Heart right ventricle (tissue), 16 donors: ENCODE measurements at regions of chr1 and their contacts with region 1.

Region 1: GRCh38 chr1:45583264-45583665 is 576 bp upstream of the NASP start:
- DNase-seq: peak; percentile 94 to 97
- ATAC-seq: peak; percentile 91 to 95 (median 93)
- H3K4me3 ChIP-seq: peak overlapping the region; percentile 80 to 100 (median 99)
- H3K27ac ChIP-seq: peak overlapping the region; percentile 86 to 96 (median 94)
- H3K4me1 ChIP-seq: peaks cover 6 to 39% (median 20%) of the 10 kb centered on the region in 9 donors
- H3K27me3 ChIP-seq: no peaks in the 10 kb centered on the region
- CTCF ChIP-seq: no peak

Region 2: GRCh38 chr1:45679123-45679522 is 95.9 kb after region 1 on chr1:
- intact Hi-C with region 1: loop called in 2 of 10 experiments (anchors 10 kb)
- DNase-seq: no peak
- ATAC-seq: peak in 4 of 8 donors; percentile 20 to 68 (median 60)
- H3K4me3 ChIP-seq: peak overlapping the region in 1 of 10 donors; percentile 9
- H3K27ac ChIP-seq: peak overlapping the region; percentile 9 to 77 (median 64)
- H3K4me1 ChIP-seq: peaks cover 10 to 100% (median 93%) of the 10 kb centered on the region in 9 donors
- H3K27me3 ChIP-seq: no peaks in the 10 kb centered on the region
- CTCF ChIP-seq: no peak

Region 3: GRCh38 chr1:45704637-45705036 is 121.4 kb after region 1 on chr1:
- intact Hi-C with region 1: no loop called
- DNase-seq: no peak
- ATAC-seq: no peak
- H3K4me3 ChIP-seq: no peak overlapping the region
- H3K27ac ChIP-seq: no peak overlapping the region
- H3K4me1 ChIP-seq: no peaks in the 10 kb centered on the region
- H3K27me3 ChIP-seq: no peaks in the 10 kb centered on the region
- CTCF ChIP-seq: no peak